Activated CD4-positive, alpha-beta T cell treated with anti-CD3 and anti-CD28 coated beads for 36 hours (primary cell): ENCODE measurements at regions of chr1 and their contacts with region 1.

Region 1: GRCh38 chr1:116139592-116140134 is 28.5 kb downstream of the MAB21L3 start:
- DNase-seq: no peak
- ATAC-seq: no peak
- H3K4me3 Mint-ChIP-seq: no peak overlapping the region
- H3K27ac Mint-ChIP-seq: no peak overlapping the region
- H3K4me1 Mint-ChIP-seq: peaks cover 12% of the 10 kb centered on the region
- H3K27me3 Mint-ChIP-seq: no peaks in the 10 kb centered on the region

Region 2: GRCh38 chr1:115479055-115479482 is 660.6 kb before region 1 on chr1:
- CTCF ChIA-PET with region 1: no interaction called
- POLR2A ChIA-PET with region 1: no interaction called
- intact Hi-C with region 1: no loop called
- DNase-seq: no peak
- ATAC-seq: no peak
- H3K4me3 Mint-ChIP-seq: no peak overlapping the region
- H3K27ac Mint-ChIP-seq: no peak overlapping the region
- H3K4me1 Mint-ChIP-seq: no peaks in the 10 kb centered on the region
- H3K27me3 Mint-ChIP-seq: peaks cover 3% of the 10 kb centered on the region

Region 3: DNA sequence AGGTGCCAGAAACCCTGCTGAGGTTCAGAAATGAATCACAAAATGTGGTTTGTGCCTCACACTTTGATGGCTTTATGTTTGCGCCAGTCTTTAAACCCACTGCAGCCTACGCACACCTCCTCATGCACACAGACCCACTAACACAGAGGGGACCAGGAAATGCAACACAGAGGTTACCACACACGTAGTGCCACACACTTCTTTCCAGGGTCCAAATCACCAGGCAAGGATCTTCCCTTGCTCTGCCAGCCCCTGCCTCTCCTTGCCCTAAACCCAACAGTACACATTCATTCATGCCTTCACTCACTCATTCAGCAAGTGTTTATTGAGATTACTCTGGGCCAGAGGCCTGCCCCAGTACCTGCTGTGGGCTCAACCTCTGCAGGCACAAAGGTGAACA is 11.0 kb before region 1 on chr1:
- CTCF ChIA-PET with region 1: interaction called, 17 read pairs
- POLR2A ChIA-PET with region 1: no interaction called
- intact Hi-C with region 1: loop called in 1 of 2 experiments (anchors 1 kb)
- DNase-seq: peak; percentile 79
- ATAC-seq: peak; percentile 88
- H3K4me3 Mint-ChIP-seq: no peak overlapping the region
- H3K27ac Mint-ChIP-seq: peak overlapping the region; percentile 63
- H3K4me1 Mint-ChIP-seq: peaks cover 39% of the 10 kb centered on the region
- H3K27me3 Mint-ChIP-seq: peaks cover 8% of the 10 kb centered on the region

Region 4: DNA sequence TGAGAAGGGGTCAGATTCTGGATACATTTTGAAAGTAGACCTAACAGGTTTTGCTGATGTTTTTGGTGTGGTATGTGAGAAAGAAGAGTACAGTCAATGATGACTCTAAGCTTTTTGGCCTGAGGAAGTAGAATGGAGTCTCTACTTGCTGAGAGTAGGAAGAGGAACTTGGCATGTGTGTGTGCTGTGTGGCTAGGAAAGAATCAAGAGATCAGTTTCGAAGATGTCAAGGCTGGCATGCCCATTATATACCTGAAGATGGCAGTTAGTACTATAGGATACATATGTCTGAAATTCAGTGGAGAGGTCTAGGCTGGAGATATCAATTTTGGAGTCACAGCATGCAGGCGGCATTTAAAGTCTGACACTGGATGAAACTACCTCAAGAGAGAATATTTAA is 36.0 kb after region 1 on chr1:
- CTCF ChIA-PET with region 1: interaction called, 14 read pairs
- POLR2A ChIA-PET with region 1: no interaction called
- intact Hi-C with region 1: no loop called
- DNase-seq: no peak
- ATAC-seq: no peak
- H3K4me3 Mint-ChIP-seq: no peak overlapping the region
- H3K27ac Mint-ChIP-seq: no peak overlapping the region
- H3K4me1 Mint-ChIP-seq: no peaks in the 10 kb centered on the region
- H3K27me3 Mint-ChIP-seq: no peaks in the 10 kb centered on the region

Region 5: GRCh38 chr1:116448813-116449281 is 309.2 kb after region 1 on chr1:
- CTCF ChIA-PET with region 1: interaction called, 14 read pairs
- POLR2A ChIA-PET with region 1: no interaction called
- intact Hi-C with region 1: no loop called
- DNase-seq: no peak
- ATAC-seq: no peak
- H3K4me3 Mint-ChIP-seq: no peak overlapping the region
- H3K27ac Mint-ChIP-seq: no peak overlapping the region
- H3K4me1 Mint-ChIP-seq: no peaks in the 10 kb centered on the region
- H3K27me3 Mint-ChIP-seq: peaks cover 2% of the 10 kb centered on the region

Region 6: GRCh38 chr1:116492358-116492811 is 352.7 kb after region 1 on chr1:
- CTCF ChIA-PET with region 1: interaction called, 178 read pairs
- POLR2A ChIA-PET with region 1: no interaction called
- intact Hi-C with region 1: no loop called
- DNase-seq: no peak
- ATAC-seq: no peak
- H3K4me3 Mint-ChIP-seq: no peak overlapping the region
- H3K27ac Mint-ChIP-seq: no peak overlapping the region
- H3K4me1 Mint-ChIP-seq: peaks cover 8% of the 10 kb centered on the region
- H3K27me3 Mint-ChIP-seq: no peaks in the 10 kb centered on the region

Region 7: GRCh38 chr1:116570358-116571200 is 430.9 kb after region 1 on chr1 and contains the start of gene CD58:
- CTCF ChIA-PET with region 1: no interaction called
- POLR2A ChIA-PET with region 1: interaction called, 3 read pairs
- intact Hi-C with region 1: loop called in 1 of 2 experiments (anchors 2 kb)
- DNase-seq: peak; percentile 93
- ATAC-seq: peak; percentile 77
- H3K4me3 Mint-ChIP-seq: peak within 1 kb of the TSS; percentile 91
- H3K27ac Mint-ChIP-seq: peak within 1 kb of the TSS; percentile 87
- H3K4me1 Mint-ChIP-seq: peaks cover 64% of the 10 kb centered on the region
- H3K27me3 Mint-ChIP-seq: peaks cover 8% of the 10 kb centered on the region
- total RNA-seq, gene CD58: 12.4 to 16.0 TPM